Activated naive CD8-positive, alpha-beta T cell treated with anti-CD3 and anti-CD28 coated beads, Interleukin-2, amount 10 ng/mL, durations not matched to agents 7 days and 5 days (primary cell): ENCODE measurements at regions of chr19 and their contacts with region 1.

Region 1: DNA sequence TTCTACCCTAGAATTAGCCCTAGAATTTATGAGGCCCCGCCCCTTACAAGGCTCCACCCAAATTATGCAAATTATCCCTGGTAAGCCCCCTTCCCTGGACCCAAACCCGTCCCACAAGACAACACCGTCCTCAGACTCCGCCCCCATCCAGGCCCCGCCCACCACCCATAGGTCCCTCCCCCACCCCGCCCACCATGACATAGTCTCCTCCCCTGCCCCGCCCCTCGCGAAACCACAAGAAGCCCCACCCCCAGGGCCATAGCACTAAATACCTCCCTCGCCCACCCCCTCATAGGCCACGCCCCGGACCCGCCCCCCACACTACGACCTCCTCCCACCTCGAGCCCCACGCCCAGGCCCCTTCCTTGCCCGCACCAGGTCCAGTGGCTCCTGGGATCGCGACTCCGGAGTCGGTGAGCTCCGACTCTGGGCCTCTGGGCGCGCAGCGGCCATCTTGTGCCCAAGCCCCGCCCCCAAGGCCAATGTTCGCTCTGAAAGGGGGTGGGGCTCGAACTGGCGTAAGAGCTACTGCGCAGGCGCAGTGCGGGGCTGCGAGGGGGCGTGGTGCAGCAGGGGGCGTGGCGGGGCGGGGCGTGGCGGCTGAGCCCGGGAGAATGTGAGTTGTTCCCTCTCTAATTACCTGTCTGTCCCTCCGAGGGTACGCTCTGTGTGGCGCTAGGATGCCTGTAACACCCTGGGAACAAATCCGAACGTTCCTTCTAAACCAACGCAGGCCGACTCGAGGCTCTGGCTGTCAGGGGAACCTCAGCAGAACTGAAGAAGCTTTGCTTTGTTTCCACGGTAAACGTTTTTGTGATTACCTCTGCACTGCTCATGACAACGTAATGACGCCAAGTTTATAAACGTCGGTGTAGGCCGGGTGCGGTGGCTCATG is at the start of gene ZNF784:
- DNase-seq: peak; percentile 97
- ATAC-seq: peak; percentile 55
- H3K4me3 Mint-ChIP-seq: peak within 1 kb of the TSS; percentile 99
- H3K27ac Mint-ChIP-seq: peak within 1 kb of the TSS; percentile 99
- H3K4me1 Mint-ChIP-seq: peaks cover 53% of the 10 kb centered on the region
- H3K27me3 Mint-ChIP-seq: peaks cover 17% of the 10 kb centered on the region
- total RNA-seq, gene ZNF784: 6.3 to 7.6 TPM

Region 2: GRCh38 chr19:55476100-55476775 is 148.1 kb before region 1 on chr19 and contains the start of gene ZNF628:
- POLR2A ChIA-PET with region 1: interaction called, 13 read pairs
- DNase-seq: peak; percentile 97
- ATAC-seq: peak; percentile 89
- H3K4me3 Mint-ChIP-seq: peak within 1 kb of the TSS; percentile 89
- H3K27ac Mint-ChIP-seq: peak within 1 kb of the TSS; percentile 94
- H3K4me1 Mint-ChIP-seq: peaks cover 18% of the 10 kb centered on the region
- H3K27me3 Mint-ChIP-seq: no peaks in the 10 kb centered on the region
- total RNA-seq, gene ZNF628: 9.4 to 11.5 TPM

Region 3: GRCh38 chr19:55605207-55605636 is 19.1 kb before region 1 on chr19:
- POLR2A ChIA-PET with region 1: interaction called, 29 read pairs
- DNase-seq: peak; percentile 97
- ATAC-seq: peak; percentile 83
- H3K4me3 Mint-ChIP-seq: peak overlapping the region; percentile 85
- H3K27ac Mint-ChIP-seq: peak overlapping the region; percentile 92
- H3K4me1 Mint-ChIP-seq: peaks cover 46% of the 10 kb centered on the region
- H3K27me3 Mint-ChIP-seq: no peaks in the 10 kb centered on the region

Region 4: DNA sequence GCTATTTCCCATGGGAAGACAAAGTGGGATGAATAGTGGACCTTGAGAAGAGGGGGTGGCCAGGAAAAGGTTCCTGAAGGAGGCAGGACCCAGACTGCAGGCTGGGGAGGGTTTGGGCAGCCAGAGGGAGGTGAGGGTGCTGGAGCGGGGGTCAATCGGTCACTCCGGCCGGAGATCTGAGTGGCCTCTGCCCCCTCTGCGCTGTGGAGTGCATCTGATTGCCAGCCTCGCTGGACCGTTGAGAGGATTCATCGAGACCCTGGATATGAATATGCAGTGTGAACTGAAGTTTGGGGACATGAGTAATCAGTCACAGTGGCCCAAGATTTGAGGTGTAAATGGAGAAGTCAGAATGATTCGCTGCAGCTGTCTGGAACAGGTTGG is 11.0 kb after region 1 on chr19:
- POLR2A ChIA-PET with region 1: interaction called, 13 read pairs
- DNase-seq: no peak
- ATAC-seq: no peak
- H3K4me3 Mint-ChIP-seq: peak overlapping the region; percentile 100
- H3K27ac Mint-ChIP-seq: peak overlapping the region; percentile 100
- H3K4me1 Mint-ChIP-seq: peaks cover 43% of the 10 kb centered on the region
- H3K27me3 Mint-ChIP-seq: peaks cover 7% of the 10 kb centered on the region